Activated CD8-positive, alpha-beta T cell treated with anti-CD3 and anti-CD28 coated beads, Interleukin-2, amount 10 ng/mL, durations not matched to agents 7 days and 5 days (primary cell): ENCODE measurements at regions of chr17 and their contacts with region 1.

Region 1: DNA sequence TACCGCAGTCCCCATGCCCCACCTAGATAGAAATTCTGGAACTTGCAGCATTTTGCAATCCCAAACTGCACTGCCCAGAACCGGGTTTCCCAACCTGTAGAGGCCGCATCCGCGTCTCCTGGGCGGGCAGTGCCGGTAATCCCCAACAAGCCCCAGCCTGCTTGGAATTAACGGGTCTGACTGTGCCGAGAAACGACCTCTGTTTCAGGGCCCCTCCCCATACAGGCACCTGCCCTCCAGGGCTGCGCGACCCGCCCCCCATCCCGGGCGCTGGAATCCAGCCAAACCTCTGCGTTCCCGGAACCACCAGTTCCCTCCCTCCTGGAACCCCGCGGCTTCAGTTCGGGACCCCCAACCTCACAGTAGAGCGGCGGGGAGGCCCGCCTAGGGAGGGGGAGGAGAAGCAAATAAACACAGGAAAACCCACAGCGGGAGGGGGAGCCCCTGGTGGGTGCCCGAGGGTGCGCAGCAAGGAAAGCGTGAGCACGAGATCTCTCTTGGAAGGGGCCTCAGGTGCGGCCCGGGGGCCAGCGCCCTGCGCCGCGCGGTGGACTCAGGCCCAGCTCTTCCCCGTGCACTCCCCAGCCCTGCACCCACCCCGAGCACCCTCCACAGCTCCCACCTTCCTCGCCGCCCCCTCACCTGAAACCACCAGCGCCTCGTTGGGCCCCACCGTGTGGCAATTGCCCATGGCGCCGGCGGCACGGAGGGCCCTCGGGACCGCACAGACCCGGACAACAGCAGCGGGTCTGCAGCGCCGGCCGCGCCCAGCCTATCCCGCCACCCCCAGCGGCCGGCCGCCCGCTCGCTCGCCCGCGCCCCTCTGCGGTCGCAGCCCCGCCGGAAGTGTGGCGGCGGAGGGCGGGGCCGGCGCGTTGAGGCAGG is at the start of gene FLOT2:
- DNase-seq: peak; percentile 73
- ATAC-seq: peak; percentile 74
- H3K4me3 Mint-ChIP-seq: peak within 1 kb of the TSS; percentile 98
- H3K27ac Mint-ChIP-seq: peak within 1 kb of the TSS; percentile 95
- H3K4me1 Mint-ChIP-seq: peaks cover 66% of the 10 kb centered on the region
- H3K27me3 Mint-ChIP-seq: no peaks in the 10 kb centered on the region
- total RNA-seq, gene FLOT2: 197 to 198 TPM

Region 2: GRCh38 chr17:28849281-28849680 is 47.8 kb before region 1 on chr17:
- CTCF ChIA-PET with region 1: interaction called, 13 read pairs
- POLR2A ChIA-PET with region 1: no interaction called
- DNase-seq: peak; percentile 32
- ATAC-seq: peak; percentile 53
- H3K4me3 Mint-ChIP-seq: no peak overlapping the region
- H3K27ac Mint-ChIP-seq: no peak overlapping the region
- H3K4me1 Mint-ChIP-seq: peaks cover 10% of the 10 kb centered on the region
- H3K27me3 Mint-ChIP-seq: no peaks in the 10 kb centered on the region

Region 3: DNA sequence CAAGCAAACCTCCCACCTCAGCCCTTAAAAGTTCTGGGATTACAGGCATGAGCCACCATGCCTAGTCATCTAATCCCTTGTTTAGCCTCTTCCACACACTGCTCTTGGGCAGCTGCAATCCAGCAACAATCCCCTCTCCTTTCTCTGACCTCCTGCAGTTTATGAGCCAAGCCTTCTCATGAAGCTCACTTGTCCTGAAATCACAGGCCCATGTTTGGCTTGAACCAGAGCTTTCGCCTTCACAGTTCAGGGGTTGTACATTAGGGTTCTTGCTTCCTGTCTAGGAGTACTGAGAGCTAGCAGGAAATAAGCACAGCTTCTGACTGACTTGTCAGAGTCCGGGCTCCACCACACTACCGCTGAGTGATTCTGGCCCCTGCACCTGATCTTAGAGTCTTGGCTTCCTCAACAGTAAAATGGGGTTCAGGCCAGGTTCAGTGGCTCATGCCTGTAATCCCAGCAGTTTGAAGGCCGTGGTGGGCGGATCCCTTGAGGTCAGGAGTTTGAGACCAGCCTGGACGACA is 26.0 kb before region 1 on chr17:
- CTCF ChIA-PET with region 1: interaction called, 21 read pairs
- POLR2A ChIA-PET with region 1: interaction called, 11 read pairs
- DNase-seq: peak; percentile 76
- ATAC-seq: peak; percentile 99
- H3K4me3 Mint-ChIP-seq: no peak overlapping the region
- H3K27ac Mint-ChIP-seq: peak overlapping the region; percentile 97
- H3K4me1 Mint-ChIP-seq: peaks cover 16% of the 10 kb centered on the region
- H3K27me3 Mint-ChIP-seq: no peaks in the 10 kb centered on the region

Region 4: DNA sequence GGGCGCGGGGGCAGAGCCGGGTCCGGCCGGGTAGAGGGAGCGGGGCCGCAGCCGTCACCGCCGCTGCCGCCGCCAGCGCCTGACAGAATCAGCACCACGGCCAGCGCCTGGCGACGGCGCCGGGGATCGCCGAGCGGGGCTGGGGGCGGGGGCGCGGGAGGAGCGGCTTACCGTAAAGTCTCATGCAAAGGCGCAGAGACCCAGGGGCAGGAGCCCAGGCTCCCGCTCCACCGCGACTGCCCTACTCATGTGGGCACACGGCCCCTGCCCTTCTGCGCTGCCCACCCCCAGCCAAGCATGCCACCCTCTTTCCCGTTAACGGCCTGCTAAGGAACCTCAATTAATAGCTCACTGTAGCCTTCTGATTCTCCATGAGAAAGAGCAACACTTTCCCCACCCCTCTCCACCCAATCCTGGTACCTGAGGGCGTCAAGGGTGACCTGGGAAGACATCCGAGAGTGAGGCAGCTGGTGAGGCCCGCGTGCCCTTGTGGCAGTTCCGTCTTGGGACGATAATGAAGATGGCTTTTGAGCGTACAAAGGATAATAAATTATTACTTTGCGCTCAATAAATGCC is 108.9 kb after region 1 on chr17 and contains the start of gene SEZ6:
- CTCF ChIA-PET with region 1: no interaction called
- POLR2A ChIA-PET with region 1: no interaction called
- DNase-seq: peak; percentile 73
- ATAC-seq: peak; percentile 90
- H3K4me3 Mint-ChIP-seq: no peak within 1 kb of the TSS
- H3K27ac Mint-ChIP-seq: no peak within 1 kb of the TSS
- H3K4me1 Mint-ChIP-seq: no peaks in the 10 kb centered on the region
- H3K27me3 Mint-ChIP-seq: peaks cover 43% of the 10 kb centered on the region
- total RNA-seq, gene SEZ6: not detected